Activated CD4-positive, alpha-beta T cell treated with anti-CD3 and anti-CD28 coated beads, Interleukin-2, amount 10 ng/mL, durations not matched to agents 24 days and 14 days (primary cell): ENCODE measurements at regions of chr6 and their contacts with region 1.

Region 1: DNA sequence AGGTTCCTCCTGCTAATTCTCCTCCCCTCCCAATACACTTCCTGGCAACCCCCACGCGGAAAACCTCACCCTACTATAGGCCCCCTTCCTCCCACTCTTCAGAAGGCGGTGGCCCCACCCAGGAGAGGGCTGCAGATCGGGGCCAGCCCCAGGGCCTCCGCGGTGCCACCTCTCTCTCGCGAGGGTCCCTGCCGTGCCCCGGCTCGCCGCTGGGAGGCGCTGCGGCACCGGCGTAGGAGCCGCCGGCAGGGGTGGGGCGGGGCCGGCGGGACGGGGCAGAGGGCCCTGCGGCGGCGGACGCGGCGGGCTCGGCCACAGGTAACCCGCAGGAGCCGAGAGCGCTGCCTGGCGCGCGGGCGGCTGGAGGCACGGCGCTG is at the start of gene ANKRD6:
- DNase-seq: peak; percentile 96
- H3K4me3 Mint-ChIP-seq: peak within 1 kb of the TSS; percentile 84
- H3K27ac Mint-ChIP-seq: peak within 1 kb of the TSS; percentile 66
- H3K4me1 Mint-ChIP-seq: peaks cover 14% of the 10 kb centered on the region
- H3K27me3 Mint-ChIP-seq: peaks cover 49% of the 10 kb centered on the region
- total RNA-seq, gene ANKRD6: 2.4 and 2.8 TPM in 2 replicates

Region 2: GRCh38 chr6:89475634-89476033 is 42.8 kb after region 1 on chr6:
- intact Hi-C with region 1: loop called (anchors 5 kb)
- DNase-seq: peak; percentile 82
- H3K4me3 Mint-ChIP-seq: peak overlapping the region; percentile 64
- H3K27ac Mint-ChIP-seq: peak overlapping the region; percentile 73
- H3K4me1 Mint-ChIP-seq: peaks cover 16% of the 10 kb centered on the region
- H3K27me3 Mint-ChIP-seq: peaks cover 6% of the 10 kb centered on the region

Region 3: DNA sequence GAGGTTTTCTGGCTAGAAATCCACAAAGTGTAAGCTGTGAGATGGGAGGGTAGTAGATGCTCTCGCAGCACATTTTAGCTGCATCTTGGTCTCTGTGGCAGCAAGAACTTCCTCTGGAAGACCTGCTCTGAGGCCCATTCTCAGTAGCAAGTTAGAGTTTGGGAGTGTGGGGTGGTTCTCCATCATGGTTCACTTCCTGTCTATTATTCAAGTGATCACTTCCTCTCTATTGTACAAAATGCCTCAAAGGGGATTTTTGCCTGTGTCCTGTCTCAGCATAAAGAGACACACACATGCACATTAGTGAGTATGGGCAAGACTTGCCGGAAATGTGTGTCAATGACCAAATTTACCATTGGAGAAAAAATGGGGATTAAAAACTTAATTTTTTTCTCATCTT is 163.2 kb after region 1 on chr6:
- intact Hi-C with region 1: loop called (anchors 1 kb)
- DNase-seq: peak; percentile 78
- H3K4me3 Mint-ChIP-seq: peak overlapping the region; percentile 48
- H3K27ac Mint-ChIP-seq: peak overlapping the region; percentile 93
- H3K4me1 Mint-ChIP-seq: peaks cover 39% of the 10 kb centered on the region
- H3K27me3 Mint-ChIP-seq: no peaks in the 10 kb centered on the region

Region 4: DNA sequence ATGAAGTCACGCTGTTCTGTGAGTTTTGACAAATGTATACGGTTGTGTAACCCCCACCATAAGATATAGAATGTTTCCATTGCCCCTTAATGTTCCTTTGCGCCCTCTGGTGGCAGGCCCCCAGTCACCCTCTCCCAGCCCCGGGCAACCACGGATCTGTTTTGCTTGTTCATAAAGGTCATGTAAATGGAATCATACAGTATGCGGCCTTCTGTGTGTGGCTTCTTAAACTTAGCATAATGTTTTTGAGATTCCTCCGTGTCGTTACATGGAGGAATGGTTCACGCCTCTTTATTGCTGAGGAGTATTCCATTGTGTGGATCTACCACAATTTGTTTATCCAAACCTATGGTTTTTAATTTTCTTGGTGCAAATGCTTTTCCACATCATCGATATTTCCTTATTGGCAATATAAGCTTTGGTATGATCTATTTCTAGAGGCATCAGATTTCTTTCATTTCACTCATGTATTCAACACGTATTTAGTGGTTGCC is 177.3 kb after region 1 on chr6:
- intact Hi-C with region 1: loop called (anchors 1 kb)
- DNase-seq: peak; percentile 93
- H3K4me3 Mint-ChIP-seq: no peak overlapping the region
- H3K27ac Mint-ChIP-seq: no peak overlapping the region
- H3K4me1 Mint-ChIP-seq: peaks cover 12% of the 10 kb centered on the region
- H3K27me3 Mint-ChIP-seq: no peaks in the 10 kb centered on the region

Region 5: GRCh38 chr6:89638320-89639195 is 205.7 kb after region 1 on chr6 and contains the start of gene LYRM2:
- intact Hi-C with region 1: loop called (anchors 1 kb)
- DNase-seq: peak; percentile 97
- H3K4me3 Mint-ChIP-seq: peak within 1 kb of the TSS; percentile 90
- H3K27ac Mint-ChIP-seq: peak within 1 kb of the TSS; percentile 98
- H3K4me1 Mint-ChIP-seq: peaks cover 26% of the 10 kb centered on the region
- H3K27me3 Mint-ChIP-seq: no peaks in the 10 kb centered on the region
- total RNA-seq, gene LYRM2: 29.4 and 33.7 TPM in 2 replicates

Region 6: DNA sequence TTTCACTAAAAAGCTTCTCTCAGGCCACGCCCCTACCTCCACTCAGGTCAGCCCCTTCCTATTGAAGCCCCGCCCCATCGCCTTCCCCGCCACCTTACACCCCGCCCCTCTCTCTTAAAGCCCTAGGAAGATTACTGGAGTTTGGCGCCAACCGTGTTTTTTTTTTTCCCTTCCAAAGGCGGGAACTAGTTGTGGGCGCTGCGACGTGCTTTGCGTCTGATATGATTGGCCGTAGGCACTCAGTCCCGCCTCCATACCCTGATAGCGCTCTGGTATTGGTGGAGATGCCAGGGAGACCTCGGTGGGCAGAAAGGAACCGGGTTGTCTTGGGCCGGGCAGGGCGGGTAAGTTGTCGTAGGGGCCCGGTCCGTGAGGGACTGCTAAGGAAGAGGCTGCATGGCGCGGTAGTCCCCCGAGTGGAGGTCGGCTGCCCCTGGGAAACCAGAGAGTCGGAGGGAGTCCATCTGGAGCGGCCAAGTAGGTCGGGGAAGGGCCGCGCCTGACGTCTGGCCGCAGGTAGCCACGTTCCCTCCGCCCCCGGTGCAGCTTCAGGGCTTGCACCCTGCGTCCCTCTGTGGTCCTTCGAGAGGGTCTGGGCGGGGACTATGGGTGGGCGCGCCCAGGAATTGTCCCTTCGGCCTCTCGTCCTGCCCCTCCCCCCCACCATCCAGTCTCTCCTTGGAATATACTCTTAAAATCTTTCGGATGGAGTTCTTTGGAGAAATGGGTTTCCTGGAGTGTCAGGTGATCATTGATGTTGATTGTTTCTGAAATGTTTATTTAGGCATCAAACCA is 396.9 kb after region 1 on chr6 and contains the start of gene CASP8AP2:
- intact Hi-C with region 1: loop called (anchors 10 kb)
- DNase-seq: peak; percentile 98
- H3K4me3 Mint-ChIP-seq: peak within 1 kb of the TSS; percentile 99
- H3K27ac Mint-ChIP-seq: peak within 1 kb of the TSS; percentile 98
- H3K4me1 Mint-ChIP-seq: peaks cover 25% of the 10 kb centered on the region
- H3K27me3 Mint-ChIP-seq: no peaks in the 10 kb centered on the region
- total RNA-seq, gene CASP8AP2: 37.3 and 37.8 TPM in 2 replicates